WTC11 (cell line): ENCODE measurements at regions of chr14 and their contacts with region 1.

Region 1: GRCh38 chr14:69879175-69880043 is at the start of gene SMOC1:
- DNase-seq: peak; percentile 87
- ATAC-seq: peak; percentile 93
- H3K4me3 Mint-ChIP-seq: peak within 1 kb of the TSS; percentile 79
- H3K27ac Mint-ChIP-seq: no peak within 1 kb of the TSS
- H3K4me1 Mint-ChIP-seq: peaks cover 8% of the 10 kb centered on the region
- H3K27me3 Mint-ChIP-seq: peaks cover 50% of the 10 kb centered on the region
- CTCF ChIP-seq: no peak
- total RNA-seq, gene SMOC1: 0.76 to 1.1 TPM (median 1.0 TPM) in 3 replicates

Region 2: GRCh38 chr14:69852531-69853321 is 26.7 kb before region 1 on chr14:
- CTCF ChIA-PET with region 1: interaction called, 14 read pairs
- POLR2A ChIA-PET with region 1: no interaction called
- DNase-seq: no peak
- ATAC-seq: no peak
- H3K4me3 Mint-ChIP-seq: no peak overlapping the region
- H3K27ac Mint-ChIP-seq: no peak overlapping the region
- H3K4me1 Mint-ChIP-seq: peaks cover 4% of the 10 kb centered on the region
- H3K27me3 Mint-ChIP-seq: no peaks in the 10 kb centered on the region; the same call in 1 of the 2 replicates
- CTCF ChIP-seq: no peak

Region 3: DNA sequence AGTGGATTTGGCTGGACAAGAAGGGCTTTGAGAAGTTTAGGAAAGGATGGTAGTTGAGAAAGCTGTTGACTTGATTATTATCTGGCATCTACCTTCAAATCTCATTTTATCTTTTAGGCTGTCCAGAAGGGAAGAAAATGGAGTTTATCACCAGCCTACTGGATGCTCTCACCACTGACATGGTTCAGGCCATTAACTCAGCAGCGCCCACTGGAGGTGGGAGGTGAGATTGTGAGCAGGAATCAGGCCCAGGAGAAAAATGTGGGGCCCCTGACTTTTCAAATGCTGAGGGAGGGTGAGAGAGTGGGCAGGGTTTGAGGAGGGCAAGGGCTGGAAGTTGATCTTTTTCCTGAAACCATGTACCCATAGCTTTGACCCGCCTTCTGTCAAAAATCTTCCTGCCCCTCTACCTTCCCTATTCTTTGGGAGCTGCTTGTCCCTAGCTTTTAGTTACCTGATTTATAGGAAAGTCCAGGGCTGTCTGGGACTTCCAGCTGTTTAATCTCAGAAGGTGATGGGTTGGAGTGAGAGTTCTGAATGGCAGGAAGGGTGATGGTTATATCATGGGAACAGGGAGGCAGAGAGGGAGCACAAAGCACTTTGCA is 134.0 kb after region 1 on chr14:
- CTCF ChIA-PET with region 1: interaction called, 12 read pairs
- POLR2A ChIA-PET with region 1: no interaction called
- DNase-seq: peak; percentile 83
- ATAC-seq: peak; percentile 92
- H3K4me3 Mint-ChIP-seq: no peak overlapping the region
- H3K27ac Mint-ChIP-seq: no peak overlapping the region
- H3K4me1 Mint-ChIP-seq: peaks cover 20% of the 10 kb centered on the region
- H3K27me3 Mint-ChIP-seq: no peaks in the 10 kb centered on the region
- CTCF ChIP-seq: peak; percentile 81